Activated CD4-positive, alpha-beta memory T cell treated with anti-CD3 and anti-CD28 coated beads, Interleukin-2, amount 10 ng/mL, durations not matched to agents 7 days and 5 days (primary cell): ENCODE measurements at regions of chr12 and their contacts with region 1.

Region 1: DNA sequence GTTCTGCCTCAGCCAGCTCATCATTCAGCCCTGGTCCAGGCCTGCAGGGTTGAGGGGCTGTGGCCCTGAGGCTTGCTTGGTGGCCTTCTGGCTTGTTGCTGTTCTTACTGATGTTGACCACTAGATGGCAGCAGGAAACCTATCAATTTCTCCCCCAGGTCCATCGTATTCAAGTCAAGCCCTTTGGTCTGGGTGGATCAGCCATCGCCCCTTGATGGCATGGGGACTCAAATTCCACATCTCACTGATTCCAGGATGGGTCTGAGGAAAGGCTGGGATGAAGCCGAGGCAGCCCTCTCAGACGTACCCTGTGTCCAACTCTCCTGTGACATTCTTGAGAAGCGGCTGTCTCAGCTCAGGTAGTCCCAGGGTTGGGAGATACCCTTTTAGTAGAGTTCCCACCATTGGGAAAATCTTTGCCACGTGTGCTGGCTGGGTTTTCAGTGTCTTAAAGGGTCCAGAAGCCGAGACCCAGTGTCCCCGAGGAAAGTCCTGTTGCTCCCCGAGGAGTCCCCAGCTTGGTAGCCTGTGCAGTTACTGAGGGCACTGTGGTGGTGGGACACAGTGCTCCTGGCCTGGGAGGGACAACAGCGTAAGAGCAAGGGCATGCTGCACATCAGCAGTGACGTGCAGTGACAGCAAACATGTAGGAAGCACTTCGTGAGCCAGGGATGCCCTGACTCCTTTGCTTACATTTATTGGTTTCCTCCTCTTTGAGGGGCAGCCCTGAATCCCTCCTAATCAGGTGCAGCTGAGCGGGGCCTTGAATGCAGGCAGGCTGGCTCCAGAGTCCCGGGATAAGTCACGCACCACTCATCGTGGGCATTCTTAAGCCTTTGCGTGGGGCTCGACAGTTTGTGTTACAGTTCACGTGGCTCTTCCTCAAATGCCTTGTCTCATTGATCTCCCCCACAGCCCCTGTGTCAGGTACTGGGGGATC is 58.6 kb downstream of the TSPAN9 start:
- DNase-seq: peak; percentile 40
- H3K4me3 Mint-ChIP-seq: no peak overlapping the region
- H3K27ac Mint-ChIP-seq: no peak overlapping the region
- H3K4me1 Mint-ChIP-seq: no peaks in the 10 kb centered on the region
- H3K27me3 Mint-ChIP-seq: peaks cover 28% of the 10 kb centered on the region

Region 2: DNA sequence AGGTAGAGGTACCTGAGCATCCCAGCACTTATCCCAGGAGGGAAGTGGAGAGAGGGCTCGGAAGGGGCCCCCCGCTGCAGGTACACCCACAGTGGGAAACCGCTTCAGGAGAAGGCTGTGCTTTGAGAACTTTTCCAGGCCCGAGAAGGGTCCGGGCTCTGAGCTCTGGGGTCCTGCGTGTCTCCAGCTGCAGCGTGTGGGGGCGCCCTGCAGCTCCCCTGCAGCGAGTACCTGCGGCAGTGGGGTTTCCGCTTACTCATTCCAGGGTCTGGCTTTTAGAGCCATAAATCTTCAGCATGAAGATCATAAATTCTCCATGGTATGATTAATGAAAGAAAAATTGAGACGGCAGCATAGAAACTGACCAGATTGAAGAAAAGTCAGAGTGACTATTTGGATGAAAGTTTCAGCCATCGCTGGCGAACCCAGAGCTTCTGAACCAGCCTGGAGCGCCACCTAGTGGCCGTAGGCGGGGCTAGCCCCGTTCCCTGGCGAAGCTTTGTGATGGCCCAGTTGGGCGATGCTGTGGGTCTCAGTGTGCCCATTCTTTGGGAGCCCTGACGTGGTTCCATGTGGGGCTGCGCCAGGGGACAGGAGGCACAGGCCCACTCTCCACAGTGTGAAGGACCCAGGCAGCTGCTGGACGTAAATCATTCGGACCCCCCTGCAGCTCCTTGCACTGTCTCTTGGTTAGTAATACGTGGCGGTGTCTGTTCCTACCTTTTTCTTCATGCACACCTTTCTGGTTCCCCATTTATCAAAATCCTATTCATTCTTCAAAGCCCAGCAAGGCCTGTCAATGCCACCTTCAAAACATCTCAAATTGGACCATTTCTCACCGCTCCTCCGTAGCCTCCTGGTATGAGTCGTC is 139.6 kb after region 1 on chr12:
- CTCF ChIA-PET with region 1: interaction called, 23 read pairs
- POLR2A ChIA-PET with region 1: no interaction called
- DNase-seq: peak; percentile 71
- H3K4me3 Mint-ChIP-seq: no peak overlapping the region
- H3K27ac Mint-ChIP-seq: no peak overlapping the region
- H3K4me1 Mint-ChIP-seq: no peaks in the 10 kb centered on the region
- H3K27me3 Mint-ChIP-seq: peaks cover 1% of the 10 kb centered on the region